ENCODE measurements at regions of chr7 and their contacts with region 1.

Region 1: DNA sequence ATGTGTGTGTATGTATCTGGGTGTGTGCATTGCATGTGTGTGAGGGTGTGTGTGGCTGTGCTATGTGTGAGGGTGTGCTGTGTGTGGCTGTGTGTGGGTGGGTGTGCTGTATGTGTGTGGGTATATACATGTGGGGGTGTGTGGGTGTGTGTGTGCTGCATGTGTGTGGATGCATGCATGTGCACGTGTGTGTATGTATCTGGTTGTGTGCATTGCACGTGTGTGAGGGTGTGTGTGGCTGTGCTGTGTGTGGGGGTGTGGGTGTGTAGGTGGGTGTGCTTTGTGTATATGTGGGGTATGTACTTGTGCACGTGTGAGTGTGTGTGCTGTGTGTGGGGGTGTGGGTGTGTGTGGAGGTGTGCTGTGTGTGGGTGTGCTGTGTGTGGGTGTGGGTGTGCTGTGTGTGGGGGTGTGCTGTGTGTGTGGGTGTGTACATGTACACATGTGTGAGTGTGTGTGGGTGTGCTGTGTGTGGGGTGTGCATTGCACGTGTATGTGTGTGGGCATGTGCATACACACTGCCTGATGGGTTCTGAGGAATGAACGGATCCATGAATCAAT is 579.8 kb downstream of the PTPRN2 start:
- DNase-seq: no peak
- ATAC-seq: peak; percentile 30
- H3K4me3 ChIP-seq: no peak overlapping the region
- H3K4me3 Mint-ChIP-seq: no peak overlapping the region
- H3K27ac ChIP-seq: no peak overlapping the region
- H3K27ac Mint-ChIP-seq: peak overlapping the region in 1 of 9 donors; percentile 4
- H3K4me1 ChIP-seq: no peaks in the 10 kb centered on the region
- H3K4me1 Mint-ChIP-seq: peaks cover 0 to 18% (median 7%) of the 10 kb centered on the region in 7 donors
- H3K27me3 ChIP-seq: no peaks in the 10 kb centered on the region
- H3K27me3 Mint-ChIP-seq: peaks cover 0 to 3% (median 0%) of the 10 kb centered on the region in 5 donors

Region 2: DNA sequence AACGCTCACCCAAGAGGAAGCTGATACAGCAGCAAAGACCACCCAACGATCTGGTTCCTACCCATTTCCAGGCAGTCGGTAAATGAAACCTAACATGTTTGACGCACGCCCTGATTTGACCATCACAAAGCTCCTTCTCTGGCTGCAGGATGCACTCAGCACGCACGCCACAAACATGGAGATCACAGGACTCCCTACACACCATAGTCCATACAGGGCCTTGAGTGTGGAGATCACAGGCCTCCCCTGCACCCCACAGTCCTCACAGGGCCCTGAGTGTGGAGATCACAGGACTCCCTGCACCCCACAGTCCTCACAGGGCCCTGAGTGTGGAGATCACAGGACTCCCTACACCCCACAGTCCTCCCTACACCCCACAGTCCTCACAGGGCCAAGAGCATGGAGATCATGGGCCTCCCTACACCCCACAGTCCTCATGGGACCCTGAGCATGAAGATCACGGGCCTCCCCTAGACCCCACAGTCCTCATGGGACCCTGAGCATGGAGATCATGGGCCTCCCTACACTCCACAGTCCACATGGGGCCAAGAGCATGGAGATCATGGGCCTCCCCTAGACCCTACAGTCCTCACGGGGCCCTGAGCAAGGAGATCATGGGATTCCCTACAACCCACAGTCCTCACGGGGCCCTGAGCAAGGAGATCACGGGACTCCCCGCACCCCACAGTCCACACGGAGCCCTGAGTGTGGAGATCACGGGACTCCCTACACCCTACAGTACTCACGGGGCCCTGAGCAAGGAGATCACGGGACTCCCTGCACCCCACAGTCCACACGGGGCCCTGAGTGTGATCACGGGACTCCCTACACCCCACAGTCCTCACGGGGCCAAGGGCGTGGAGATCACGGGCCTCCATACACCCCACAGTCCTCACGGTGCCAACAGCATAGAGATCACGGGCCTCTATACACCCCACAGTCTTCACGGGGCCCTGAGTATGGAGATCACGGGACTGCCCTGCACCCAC is 261.8 kb before region 1 on chr7:
- CTCF ChIA-PET with region 1: no interaction called
- POLR2A ChIA-PET with region 1: no interaction called
- intact Hi-C with region 1: no loop called
- DNase-seq: no peak
- ATAC-seq: peak; percentile 27
- H3K4me3 ChIP-seq: no peak overlapping the region
- H3K4me3 Mint-ChIP-seq: no peak overlapping the region
- H3K27ac ChIP-seq: no peak overlapping the region
- H3K27ac Mint-ChIP-seq: no peak overlapping the region
- H3K4me1 ChIP-seq: no peaks in the 10 kb centered on the region
- H3K4me1 Mint-ChIP-seq: no peaks in the 10 kb centered on the region
- H3K27me3 ChIP-seq: no peaks in the 10 kb centered on the region
- H3K27me3 Mint-ChIP-seq: peaks cover 0 to 10% (median 0%) of the 10 kb centered on the region in 5 donors

Region 3: DNA sequence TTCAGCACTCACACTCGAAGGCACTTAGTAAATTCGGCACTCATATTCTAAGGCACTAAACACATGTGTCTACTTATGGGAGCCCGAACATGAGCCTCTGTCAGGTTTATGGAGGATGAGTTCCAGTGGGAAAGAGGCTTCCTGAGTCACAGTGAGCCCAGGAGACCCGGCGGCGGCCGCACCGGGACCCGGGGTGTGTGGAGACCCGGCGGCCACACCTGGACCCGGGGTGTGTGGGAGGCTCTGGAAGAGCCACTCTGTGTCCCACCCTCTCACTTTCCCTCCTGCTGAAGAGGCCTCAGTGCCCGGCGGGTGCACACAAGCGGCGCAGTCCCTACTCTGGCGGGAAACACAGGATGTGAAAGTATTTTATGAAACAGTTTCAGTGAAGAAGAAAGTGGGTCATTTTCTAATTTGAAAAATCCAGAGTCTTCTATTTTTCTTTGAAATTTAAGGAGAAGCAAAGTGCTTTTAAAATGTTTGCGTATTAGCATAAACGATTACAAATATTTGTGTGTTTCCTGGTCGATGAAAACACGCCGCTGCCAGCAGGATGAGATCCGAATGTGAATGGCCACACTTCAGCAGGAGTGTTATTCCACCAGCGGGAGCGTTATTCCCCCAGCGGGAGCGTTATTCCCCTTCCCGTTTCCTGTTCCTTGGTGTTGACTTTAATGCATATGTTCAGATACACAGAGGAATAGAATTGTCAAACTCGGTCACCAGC is 45.9 kb before region 1 on chr7:
- CTCF ChIA-PET with region 1: no interaction called
- POLR2A ChIA-PET with region 1: no interaction called
- intact Hi-C with region 1: no loop called
- DNase-seq: no peak
- ATAC-seq: no peak
- H3K4me3 ChIP-seq: no peak overlapping the region
- H3K4me3 Mint-ChIP-seq: no peak overlapping the region
- H3K27ac ChIP-seq: no peak overlapping the region
- H3K27ac Mint-ChIP-seq: no peak overlapping the region
- H3K4me1 ChIP-seq: no peaks in the 10 kb centered on the region
- H3K4me1 Mint-ChIP-seq: no peaks in the 10 kb centered on the region
- H3K27me3 ChIP-seq: no peaks in the 10 kb centered on the region
- H3K27me3 Mint-ChIP-seq: peaks cover 7 to 45% (median 17%) of the 10 kb centered on the region in 5 donors

Region 4: DNA sequence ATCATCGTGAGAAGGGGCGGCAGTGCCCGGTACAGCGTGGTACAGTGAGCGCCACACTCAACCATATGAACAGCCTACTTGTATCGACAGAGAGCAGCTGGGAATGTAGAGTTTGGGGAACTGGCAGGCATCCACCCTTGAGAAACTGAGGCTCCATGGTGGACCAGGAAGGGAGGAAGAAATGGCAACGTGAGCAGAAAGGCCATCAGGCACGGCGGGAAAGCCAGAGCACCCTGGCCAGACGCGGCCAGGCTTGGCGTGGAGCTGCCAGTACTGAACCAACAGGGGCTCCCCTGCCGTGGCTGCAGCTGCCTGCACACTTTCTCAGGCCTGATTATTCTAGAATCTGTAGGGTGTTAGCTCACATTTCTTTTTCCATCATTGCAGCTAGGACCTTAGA is 137.6 kb after region 1 on chr7:
- CTCF ChIA-PET with region 1: no interaction called
- POLR2A ChIA-PET with region 1: no interaction called
- intact Hi-C with region 1: loop called in 1 of 2 experiments (anchors 5 kb)
- DNase-seq: no peak
- ATAC-seq: no peak
- H3K4me3 ChIP-seq: no peak overlapping the region
- H3K4me3 Mint-ChIP-seq: no peak overlapping the region
- H3K27ac ChIP-seq: no peak overlapping the region
- H3K27ac Mint-ChIP-seq: no peak overlapping the region
- H3K4me1 ChIP-seq: no peaks in the 10 kb centered on the region
- H3K4me1 Mint-ChIP-seq: no peaks in the 10 kb centered on the region
- H3K27me3 ChIP-seq: no peaks in the 10 kb centered on the region
- H3K27me3 Mint-ChIP-seq: no peaks in the 10 kb centered on the region

Measured in naive thymus-derived CD4-positive, alpha-beta T cell (primary cell).